ENCODE measurements at regions of chr4 and their contacts with region 1.

Region 1: DNA sequence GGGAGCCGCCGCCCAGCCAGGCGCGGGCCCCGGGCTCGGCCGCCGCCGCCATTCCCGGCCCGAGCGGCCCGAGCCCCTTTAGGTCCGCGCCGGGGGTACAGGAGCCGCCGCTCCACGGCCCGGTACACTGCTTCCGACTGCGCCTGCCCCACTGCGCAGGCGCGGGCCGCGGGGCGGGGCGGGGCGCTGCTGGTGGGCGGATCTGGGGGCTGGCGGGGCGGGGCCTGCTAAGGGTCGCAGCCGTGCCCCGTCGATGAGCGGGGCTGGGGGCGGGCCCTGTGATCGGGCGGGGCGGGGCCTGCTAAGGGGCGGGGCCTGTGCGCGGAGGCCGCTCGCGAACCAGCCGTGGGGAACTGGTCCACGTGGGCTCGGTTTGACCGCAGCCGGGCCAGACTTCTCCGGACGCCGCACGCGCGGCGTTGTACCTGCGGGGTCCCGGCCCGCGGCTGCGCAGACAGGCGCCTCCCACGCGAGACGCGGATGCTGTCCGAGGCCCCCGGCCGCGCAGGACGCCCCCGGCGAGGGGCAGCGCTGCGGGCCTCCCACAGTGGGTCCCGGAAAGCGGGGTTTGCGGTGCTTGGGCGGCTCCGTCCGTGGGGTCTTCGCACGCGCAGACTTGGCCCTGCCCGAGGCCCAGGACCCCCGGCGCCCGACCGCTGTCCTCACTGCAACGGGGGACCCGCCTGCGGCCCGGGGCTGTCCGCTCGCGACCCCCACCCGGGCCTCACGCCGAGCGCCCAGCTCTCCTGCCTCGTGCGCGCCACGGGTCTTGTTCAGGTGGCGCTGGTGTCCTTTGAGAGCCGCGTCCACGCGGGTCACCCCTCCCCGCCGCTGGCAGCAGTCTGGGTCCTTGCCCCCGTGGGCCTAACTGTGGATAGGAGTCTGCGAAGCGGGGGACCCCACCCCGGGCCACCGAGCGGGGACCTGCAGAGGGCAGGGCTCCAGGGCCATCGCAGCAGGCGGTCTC is at the start of gene DGKQ:
- H3K4me3 Mint-ChIP-seq: peak within 1 kb of the TSS; percentile 77
- H3K27ac Mint-ChIP-seq: peak within 1 kb of the TSS; percentile 52
- H3K4me1 Mint-ChIP-seq: peaks cover 38% of the 10 kb centered on the region
- H3K27me3 Mint-ChIP-seq: peaks cover 17% of the 10 kb centered on the region

Region 2: DNA sequence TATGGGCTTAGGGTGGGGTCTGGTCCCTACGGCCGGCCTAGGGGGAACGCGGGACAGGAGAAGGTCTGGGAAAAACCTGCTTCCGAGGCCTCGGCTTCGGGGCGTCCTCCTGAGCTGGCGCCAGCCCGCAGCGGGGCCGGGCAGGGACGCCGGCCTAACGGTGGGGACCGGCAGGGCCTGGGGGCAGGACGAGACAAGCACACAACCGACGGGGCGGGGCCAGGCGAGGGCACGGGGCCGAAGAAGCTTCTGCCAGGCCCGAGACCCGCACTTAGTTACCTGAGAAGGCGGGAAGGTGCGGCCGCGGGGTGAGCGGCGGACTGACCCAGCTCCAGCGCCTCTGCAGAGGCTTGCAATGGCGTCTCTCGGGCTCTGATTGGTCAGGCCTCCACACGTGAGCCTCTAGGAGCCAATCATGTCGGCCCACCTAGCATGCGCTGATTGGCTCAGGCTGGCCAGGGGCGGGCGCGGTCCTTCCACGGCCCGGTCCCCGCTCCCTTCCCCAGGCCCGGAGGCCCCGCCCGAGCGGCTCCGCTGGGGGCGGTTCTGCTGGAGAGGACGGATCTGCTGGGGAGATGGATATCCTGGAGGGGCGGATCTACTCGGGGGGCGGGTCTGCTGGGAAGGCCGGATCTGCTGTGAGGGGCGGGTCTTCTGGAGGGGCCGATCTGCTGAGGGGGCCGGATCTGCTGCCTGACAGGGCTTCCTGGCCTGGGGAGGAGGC is 192.1 kb before region 1 on chr4:
- intact Hi-C with region 1: loop called (anchors 2 kb)
- H3K4me3 Mint-ChIP-seq: peak overlapping the region; percentile 87
- H3K27ac Mint-ChIP-seq: peak overlapping the region; percentile 93
- H3K4me1 Mint-ChIP-seq: peaks cover 73% of the 10 kb centered on the region
- H3K27me3 Mint-ChIP-seq: peaks cover 28% of the 10 kb centered on the region

Region 3: DNA sequence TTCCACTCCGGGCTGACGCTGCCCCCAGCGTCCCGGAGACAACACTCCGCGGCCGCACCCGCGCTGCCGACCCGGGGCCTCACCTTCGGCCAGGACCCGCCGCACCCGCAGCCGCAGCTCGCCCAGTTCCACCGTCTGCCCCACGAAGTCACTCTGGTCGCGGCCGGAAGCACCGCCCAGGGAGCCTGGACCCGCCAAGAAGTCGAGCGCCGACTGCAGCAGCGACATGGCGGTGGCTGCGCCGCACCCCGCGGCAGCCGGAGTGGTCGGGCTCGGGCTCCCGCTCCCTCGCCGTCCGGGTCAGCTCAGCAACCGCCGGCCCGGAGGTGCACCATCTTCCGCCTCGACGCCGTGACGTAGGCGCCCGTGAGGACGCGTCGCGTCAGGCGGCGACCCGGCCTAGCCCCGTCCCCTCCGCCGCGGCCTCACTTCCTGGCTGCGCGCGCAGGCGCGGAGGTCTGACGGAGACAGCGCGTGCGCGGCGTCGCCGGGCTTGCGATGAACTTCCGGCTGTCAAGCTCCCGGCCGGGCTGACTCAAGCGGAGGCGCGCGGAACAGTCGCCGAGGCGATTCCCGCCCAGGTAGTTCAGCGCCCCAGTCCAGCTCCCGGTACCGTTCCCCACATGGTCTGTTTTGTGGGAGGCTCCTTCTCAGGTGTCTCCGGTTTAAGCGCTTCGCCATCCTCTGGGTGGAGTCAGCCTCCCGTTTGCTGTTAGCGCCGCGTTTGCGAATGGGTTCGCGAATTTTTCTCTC is 41.6 kb before region 1 on chr4 and contains the starts of genes GAK and TMEM175:
- intact Hi-C with region 1: loop called (anchors 2 kb)
- H3K4me3 Mint-ChIP-seq: peak within 1 kb of the TSS; percentile 97
- H3K27ac Mint-ChIP-seq: peak within 1 kb of the TSS; percentile 97
- H3K4me1 Mint-ChIP-seq: peaks cover 68% of the 10 kb centered on the region
- H3K27me3 Mint-ChIP-seq: no peaks in the 10 kb centered on the region

Region 4: GRCh38 chr4:986879-987623 is 13.3 kb after region 1 on chr4 and contains the start of gene IDUA:
- intact Hi-C with region 1: loop called (anchors 1 kb)
- H3K4me3 Mint-ChIP-seq: peak within 1 kb of the TSS; percentile 82
- H3K27ac Mint-ChIP-seq: peak within 1 kb of the TSS; percentile 83
- H3K4me1 Mint-ChIP-seq: peaks cover 36% of the 10 kb centered on the region
- H3K27me3 Mint-ChIP-seq: peaks cover 1% of the 10 kb centered on the region

Region 5: GRCh38 chr4:1026115-1026514 is 52.4 kb after region 1 on chr4:
- intact Hi-C with region 1: no loop called
- H3K4me3 Mint-ChIP-seq: no peak overlapping the region
- H3K27ac Mint-ChIP-seq: no peak overlapping the region
- H3K4me1 Mint-ChIP-seq: no peaks in the 10 kb centered on the region
- H3K27me3 Mint-ChIP-seq: peaks cover 13% of the 10 kb centered on the region

Measured in dendritic cell treated with granulocyte-macrophage colony-stimulating factor and Interleukin-4, amounts not matched to agents 40 ng/mL and 50 ng/mL, for 4 days (primary cell).